AG04449 (cell line): ENCODE measurements at regions of chr5 and their contacts with region 1.

Region 1: GRCh38 chr5:115246361-115246991 is 16.2 kb downstream of the PGGT1B start:
- DNase-seq: no peak
- H3K4me3 ChIP-seq: no peak overlapping the region
- CTCF ChIP-seq: peak; percentile 35

Region 2: GRCh38 chr5:115098041-115098702 is 148.3 kb before region 1 on chr5:
- CTCF ChIA-PET with region 1: interaction called, 100 read pairs
- POLR2A ChIA-PET with region 1: no interaction called
- DNase-seq: peak; percentile 12
- H3K4me3 ChIP-seq: no peak overlapping the region
- CTCF ChIP-seq: peak; percentile 69

Region 3: DNA sequence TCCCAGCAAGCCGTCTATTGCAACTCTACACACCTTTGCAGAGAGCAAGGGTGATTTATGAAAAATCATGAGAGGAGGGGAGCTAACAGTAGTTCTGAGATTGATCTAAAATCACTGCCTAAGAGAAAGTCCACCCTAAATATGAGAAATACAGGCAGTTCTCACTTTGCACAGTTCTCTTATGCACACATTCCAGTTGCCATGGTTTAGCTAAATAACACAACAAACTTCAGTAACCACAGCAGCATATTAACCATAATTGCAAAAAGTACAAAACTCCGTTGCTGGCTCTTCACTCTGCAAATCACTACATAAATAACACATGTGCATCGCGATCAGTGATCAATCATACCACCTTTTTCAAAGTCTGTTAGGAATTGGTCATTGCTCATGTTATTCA is 14.9 kb before region 1 on chr5:
- CTCF ChIA-PET with region 1: interaction called, 15 read pairs
- POLR2A ChIA-PET with region 1: no interaction called
- DNase-seq: no peak
- H3K4me3 ChIP-seq: no peak overlapping the region
- CTCF ChIP-seq: no peak

Region 4: GRCh38 chr5:115571441-115571878 is 325.0 kb after region 1 on chr5:
- CTCF ChIA-PET with region 1: no interaction called
- POLR2A ChIA-PET with region 1: no interaction called
- DNase-seq: no peak
- H3K4me3 ChIP-seq: no peak overlapping the region
- CTCF ChIP-seq: no peak